Activated T-helper 2 cell treated with anti-CD3 and anti-CD28 coated beads, Interferon-gamma antibody, Interleukin-2, Interleukin-4, amounts not matched to agents 10 μg/mL and 5 μg/mL and 100 μg/mL, durations not matched to agents 14 hours and 24 hours and 36 hours (primary cell): ENCODE measurements at regions of chr3 and their contacts with region 1.

Region 1: DNA sequence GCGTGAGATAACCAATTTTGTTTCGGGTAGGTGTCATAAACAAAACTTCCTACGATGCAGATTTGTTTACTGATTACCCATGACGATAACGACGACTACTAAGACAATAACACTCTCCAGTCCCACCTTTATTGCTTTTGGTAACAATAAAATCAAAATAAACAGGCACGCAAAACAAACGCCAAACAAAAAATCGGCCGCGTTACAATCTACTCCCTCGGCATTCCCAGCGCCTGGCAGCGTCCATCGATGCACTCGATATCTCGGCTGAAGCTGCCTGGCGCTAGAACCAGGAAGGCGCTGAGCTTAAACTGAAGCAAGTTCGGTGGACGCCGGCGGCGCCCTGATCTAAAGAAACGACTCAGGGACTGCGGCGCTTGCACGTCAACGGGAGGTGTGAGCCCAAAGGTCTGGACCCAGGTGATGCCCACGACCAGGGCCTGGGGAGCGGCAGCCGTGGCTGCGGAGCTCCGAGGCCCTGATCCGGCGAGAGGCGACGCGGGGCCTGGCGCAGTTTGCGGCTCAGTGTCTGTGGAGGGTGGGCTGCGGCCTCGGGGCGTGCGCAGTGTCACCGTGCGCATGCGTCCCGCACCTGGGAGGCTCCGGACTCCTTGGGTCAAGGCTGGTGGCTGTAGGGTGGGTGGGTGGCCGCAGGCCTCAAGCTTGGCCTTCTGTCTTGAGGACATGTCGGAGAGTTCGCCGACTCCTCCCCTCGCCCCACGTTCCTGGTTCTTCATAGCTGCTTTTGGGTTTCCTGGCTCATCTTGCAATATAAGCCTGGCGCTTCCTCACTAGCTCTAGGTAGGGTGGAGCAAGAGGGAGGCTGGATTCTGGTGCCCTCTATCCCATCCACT is at the start of gene RSRC1:
- DNase-seq: peak; percentile 74
- H3K4me3 Mint-ChIP-seq: peak within 1 kb of the TSS; percentile 89
- H3K27ac Mint-ChIP-seq: peak within 1 kb of the TSS; percentile 60
- H3K4me1 Mint-ChIP-seq: peaks cover 49% of the 10 kb centered on the region
- H3K27me3 Mint-ChIP-seq: peaks cover 37% of the 10 kb centered on the region
- total RNA-seq, gene RSRC1: 46.5 and 46.9 TPM in 2 replicates

Region 2: GRCh38 chr3:158097593-158098308 is 12.3 kb before region 1 on chr3:
- intact Hi-C with region 1: loop called (anchors 1 kb)
- DNase-seq: peak; percentile 73
- H3K4me3 Mint-ChIP-seq: peak overlapping the region; percentile 84
- H3K27ac Mint-ChIP-seq: no peak overlapping the region
- H3K4me1 Mint-ChIP-seq: peaks cover 9% of the 10 kb centered on the region
- H3K27me3 Mint-ChIP-seq: peaks cover 90% of the 10 kb centered on the region

Region 3: GRCh38 chr3:158167737-158168471 is 57.9 kb after region 1 on chr3:
- intact Hi-C with region 1: loop called (anchors 2 kb)
- DNase-seq: no peak
- H3K4me3 Mint-ChIP-seq: no peak overlapping the region
- H3K27ac Mint-ChIP-seq: no peak overlapping the region
- H3K4me1 Mint-ChIP-seq: peaks cover 7% of the 10 kb centered on the region
- H3K27me3 Mint-ChIP-seq: no peaks in the 10 kb centered on the region

Region 4: DNA sequence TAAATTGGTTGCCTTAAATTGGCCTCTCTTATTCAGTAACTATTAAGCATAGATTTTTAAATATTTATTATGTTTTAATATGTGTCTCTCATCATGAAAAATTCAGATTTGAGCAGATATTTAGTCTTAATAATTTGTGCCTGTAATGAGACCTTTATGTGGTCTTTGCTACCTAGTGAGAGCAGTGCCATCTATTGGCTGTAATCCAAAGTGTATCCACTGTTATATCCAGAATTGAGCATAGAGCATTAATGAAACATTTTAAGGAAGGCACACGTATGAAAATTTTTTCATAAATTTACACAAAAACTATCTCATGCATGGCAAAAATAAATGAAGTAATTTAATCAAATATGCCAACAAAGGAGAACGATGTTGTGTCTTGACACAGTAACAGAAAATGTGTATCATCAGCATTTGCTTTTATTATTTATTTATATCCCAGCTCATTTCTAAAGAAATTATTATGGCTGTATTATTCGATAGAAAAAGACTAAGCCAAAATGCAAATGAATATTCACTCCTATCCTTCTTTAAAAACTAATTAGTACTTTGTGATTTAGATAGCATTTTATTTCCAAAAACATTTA is 203.4 kb after region 1 on chr3:
- intact Hi-C with region 1: loop called (anchors 1 kb)
- DNase-seq: no peak
- H3K4me3 Mint-ChIP-seq: no peak overlapping the region
- H3K27ac Mint-ChIP-seq: no peak overlapping the region
- H3K4me1 Mint-ChIP-seq: no peaks in the 10 kb centered on the region
- H3K27me3 Mint-ChIP-seq: no peaks in the 10 kb centered on the region

Region 5: DNA sequence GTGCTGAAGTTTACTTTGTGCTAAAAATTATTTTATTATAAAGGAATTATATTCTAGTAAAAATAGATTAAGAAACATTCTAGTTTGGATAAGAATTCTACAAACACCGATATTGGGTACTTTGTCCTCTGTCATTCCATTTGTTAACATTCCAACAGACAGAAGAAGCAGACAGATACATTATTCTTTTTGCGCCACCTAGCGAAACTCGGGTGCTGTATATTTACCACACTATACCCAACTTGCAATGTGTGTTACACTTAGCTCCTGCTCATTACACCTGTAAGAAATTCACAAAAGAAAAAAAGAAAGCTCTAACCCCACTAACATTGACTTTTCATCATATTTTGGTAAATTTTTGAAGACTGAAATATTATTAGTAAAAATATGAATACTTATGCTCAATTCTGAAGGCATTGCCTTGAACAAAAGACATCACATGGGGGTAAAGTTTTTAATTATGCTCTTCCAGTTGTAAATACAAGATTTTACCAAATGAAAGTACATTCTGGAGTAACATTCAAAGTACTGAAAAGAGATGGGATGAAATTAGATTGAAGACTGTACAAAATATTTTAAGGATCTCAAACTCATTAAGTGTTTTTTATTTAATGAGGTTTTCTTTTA is 324.5 kb after region 1 on chr3:
- intact Hi-C with region 1: loop called (anchors 2 kb)
- DNase-seq: peak; percentile 9
- H3K4me3 Mint-ChIP-seq: no peak overlapping the region
- H3K27ac Mint-ChIP-seq: no peak overlapping the region
- H3K4me1 Mint-ChIP-seq: no peaks in the 10 kb centered on the region
- H3K27me3 Mint-ChIP-seq: no peaks in the 10 kb centered on the region

Region 6: DNA sequence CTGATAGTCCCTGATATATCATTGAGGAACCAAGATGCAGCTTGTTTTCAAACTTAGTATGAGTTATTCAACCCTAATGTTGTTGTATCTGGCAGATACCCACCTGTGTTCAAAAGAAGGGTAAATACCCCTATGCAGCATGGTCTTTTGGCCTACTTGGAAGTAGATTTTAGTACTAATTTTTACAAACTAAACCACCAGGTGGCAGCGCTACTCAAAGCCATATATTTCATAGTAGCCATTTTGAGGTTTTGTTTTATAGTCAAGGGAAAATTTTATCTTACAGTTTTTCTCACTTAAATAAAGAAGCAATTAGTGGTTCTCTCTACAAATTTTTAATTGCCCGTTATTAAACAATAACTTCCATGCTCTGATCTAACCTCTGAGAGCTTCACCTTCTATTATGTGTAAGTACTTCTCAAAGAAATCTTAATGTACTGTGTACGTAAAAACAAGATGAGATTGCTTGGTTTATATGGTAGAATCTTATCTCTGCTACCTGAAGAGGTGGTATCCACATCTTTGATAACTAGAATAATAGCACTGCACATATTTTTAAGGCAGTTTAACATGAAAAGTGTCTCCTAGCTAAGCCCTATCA is 429.5 kb after region 1 on chr3:
- intact Hi-C with region 1: loop called (anchors 5 kb)
- DNase-seq: no peak
- H3K4me3 Mint-ChIP-seq: no peak overlapping the region
- H3K27ac Mint-ChIP-seq: no peak overlapping the region
- H3K4me1 Mint-ChIP-seq: no peaks in the 10 kb centered on the region
- H3K27me3 Mint-ChIP-seq: no peaks in the 10 kb centered on the region

Region 7: GRCh38 chr3:158644345-158644908 is 534.4 kb after region 1 on chr3 and contains the start of gene GFM1:
- intact Hi-C with region 1: loop called (anchors 10 kb)
- DNase-seq: peak; percentile 87
- H3K4me3 Mint-ChIP-seq: peak within 1 kb of the TSS; percentile 96
- H3K27ac Mint-ChIP-seq: peak within 1 kb of the TSS; percentile 93
- H3K4me1 Mint-ChIP-seq: peaks cover 27% of the 10 kb centered on the region
- H3K27me3 Mint-ChIP-seq: no peaks in the 10 kb centered on the region
- total RNA-seq, gene GFM1: 59.1 and 60.9 TPM in 2 replicates